ENCODE measurements at regions of chr17 and their contacts with region 1.

Region 1: GRCh38 chr17:21126645-21127510 is at the start of gene DHRS7B:
- DNase-seq: peak; percentile 98
- ATAC-seq: peak; percentile 96
- H3K4me3 Mint-ChIP-seq: peak within 1 kb of the TSS; percentile 91
- H3K27ac Mint-ChIP-seq: peak within 1 kb of the TSS; percentile 98
- H3K4me1 Mint-ChIP-seq: peaks cover 23% of the 10 kb centered on the region
- H3K27me3 Mint-ChIP-seq: no peaks in the 10 kb centered on the region
- total RNA-seq, gene DHRS7B: 12.8 to 15.0 TPM

Region 2: GRCh38 chr17:21252796-21253645 is 126.1 kb after region 1 on chr17 and contains the start of gene NATD1:
- CTCF ChIA-PET with region 1: no interaction called
- POLR2A ChIA-PET with region 1: no interaction called
- intact Hi-C with region 1: loop called in 1 of 2 experiments (anchors 1 kb)
- DNase-seq: peak; percentile 86
- ATAC-seq: peak; percentile 71
- H3K4me3 Mint-ChIP-seq: peak within 1 kb of the TSS; percentile 77
- H3K27ac Mint-ChIP-seq: peak within 1 kb of the TSS; percentile 47
- H3K4me1 Mint-ChIP-seq: peaks cover 6% of the 10 kb centered on the region
- H3K27me3 Mint-ChIP-seq: no peaks in the 10 kb centered on the region
- total RNA-seq, gene NATD1: 1.5 to 1.7 TPM